Endothelial cell of umbilical vein (primary cell): ENCODE measurements at regions of chr6 and their contacts with region 1.

Region 1: DNA sequence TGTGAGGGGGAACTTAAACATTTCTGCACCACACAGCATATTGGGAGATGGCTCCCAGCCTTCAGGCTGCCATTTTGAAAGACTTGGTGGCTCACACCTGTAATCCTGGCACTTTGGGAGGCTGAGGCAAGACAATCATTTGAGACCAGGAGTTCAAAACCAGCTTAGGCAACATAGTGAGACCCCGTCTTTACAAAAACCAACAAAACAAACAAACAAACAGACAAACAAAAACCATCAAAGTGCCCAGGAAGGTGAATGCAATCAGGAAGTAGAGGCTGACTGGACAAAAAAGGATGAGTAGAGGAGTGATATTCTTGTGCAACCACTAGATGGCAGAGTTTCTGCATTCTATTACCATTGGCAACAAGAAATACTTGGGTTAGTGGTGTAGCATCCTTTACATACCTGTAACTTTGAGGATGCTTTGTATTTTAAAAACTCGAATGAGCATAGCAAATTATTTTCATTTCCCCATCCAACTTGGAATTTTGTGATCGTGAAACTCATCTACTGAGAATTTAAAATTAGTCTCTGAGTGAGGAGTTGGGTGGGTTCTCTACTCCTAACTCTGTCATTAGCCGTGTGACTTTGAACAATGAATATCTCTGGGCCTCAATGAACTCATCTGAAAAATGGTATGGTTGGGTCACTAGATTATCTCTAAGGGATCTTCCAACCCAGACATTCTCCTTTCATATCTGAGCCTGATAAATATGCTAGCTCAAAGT is 84.4 kb downstream of the CRYBG1 start:
- DNase-seq: peak; percentile 52
- H3K4me3 ChIP-seq: no peak overlapping the region
- H3K27ac ChIP-seq: no peak overlapping the region
- H3K4me1 ChIP-seq: no peaks in the 10 kb centered on the region
- H3K27me3 ChIP-seq: peaks cover 14 to 29% of the 10 kb centered on the region in 2 experiments
- CTCF ChIP-seq: peak; percentile 61 to 68
- POLR2A ChIP-seq: no peak

Region 2: GRCh38 chr6:106237286-106237685 is 207.7 kb before region 1 on chr6:
- CTCF ChIA-PET with region 1: no interaction called
- POLR2A ChIA-PET with region 1: no interaction called
- dilution Hi-C with region 1: no loop called
- intact Hi-C with region 1: no loop called
- DNase-seq: no peak
- H3K4me3 ChIP-seq: no peak overlapping the region
- H3K27ac ChIP-seq: no peak overlapping the region
- H3K4me1 ChIP-seq: no peaks in the 10 kb centered on the region
- H3K27me3 ChIP-seq: no peaks in the 10 kb centered on the region
- CTCF ChIP-seq: no peak
- POLR2A ChIP-seq: no peak

Region 3: DNA sequence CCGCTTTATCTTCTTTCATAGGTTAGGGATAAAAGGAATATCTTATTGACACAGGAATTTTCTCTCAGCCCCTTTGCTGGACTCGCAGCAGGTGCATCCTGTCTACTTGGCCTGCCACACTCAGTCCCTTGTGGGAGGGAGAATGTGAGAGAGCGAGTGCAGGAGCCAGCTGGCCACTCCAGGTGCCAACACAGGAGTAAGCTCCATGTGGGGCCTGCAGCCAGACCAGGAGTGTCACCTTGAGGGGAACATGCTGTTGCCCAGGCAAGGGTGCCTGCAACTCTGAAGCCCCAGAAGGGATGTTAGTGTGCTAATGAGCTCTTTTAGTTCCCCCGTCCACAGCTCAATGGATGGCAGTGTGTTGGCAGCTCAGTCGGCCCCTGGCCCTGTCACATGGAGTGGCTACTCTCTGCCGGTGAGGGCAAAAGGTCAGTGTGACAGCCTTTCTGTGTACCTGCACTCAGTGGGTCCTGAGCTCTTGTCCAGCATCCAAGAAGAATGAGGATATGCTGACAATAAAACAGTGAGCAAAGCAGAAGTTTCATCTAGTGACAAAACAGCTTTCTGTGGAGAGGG is 27.3 kb before region 1 on chr6:
- CTCF ChIA-PET with region 1: no interaction called
- POLR2A ChIA-PET with region 1: no interaction called
- dilution Hi-C with region 1: no loop called
- intact Hi-C with region 1: no loop called
- DNase-seq: peak; percentile 34
- H3K4me3 ChIP-seq: no peak overlapping the region
- H3K27ac ChIP-seq: no peak overlapping the region
- H3K4me1 ChIP-seq: no peaks in the 10 kb centered on the region
- H3K27me3 ChIP-seq: peaks cover 0 to 2% of the 10 kb centered on the region in 2 experiments
- CTCF ChIP-seq: no peak
- POLR2A ChIP-seq: no peak

Region 4: GRCh38 chr6:106556368-106556960 is 111.5 kb after region 1 on chr6:
- CTCF ChIA-PET with region 1: interaction called, 397 read pairs
- POLR2A ChIA-PET with region 1: no interaction called
- dilution Hi-C with region 1: loop called (anchors 25 kb)
- intact Hi-C with region 1: loop called (anchors 2 kb)
- DNase-seq: peak; percentile 61
- H3K4me3 ChIP-seq: no peak overlapping the region
- H3K27ac ChIP-seq: no peak overlapping the region
- H3K4me1 ChIP-seq: no peaks in the 10 kb centered on the region
- H3K27me3 ChIP-seq: no peaks in the 10 kb centered on the region
- CTCF ChIP-seq: peak in 1 of 2 donors; percentile 28
- POLR2A ChIP-seq: no peak

Region 5: DNA sequence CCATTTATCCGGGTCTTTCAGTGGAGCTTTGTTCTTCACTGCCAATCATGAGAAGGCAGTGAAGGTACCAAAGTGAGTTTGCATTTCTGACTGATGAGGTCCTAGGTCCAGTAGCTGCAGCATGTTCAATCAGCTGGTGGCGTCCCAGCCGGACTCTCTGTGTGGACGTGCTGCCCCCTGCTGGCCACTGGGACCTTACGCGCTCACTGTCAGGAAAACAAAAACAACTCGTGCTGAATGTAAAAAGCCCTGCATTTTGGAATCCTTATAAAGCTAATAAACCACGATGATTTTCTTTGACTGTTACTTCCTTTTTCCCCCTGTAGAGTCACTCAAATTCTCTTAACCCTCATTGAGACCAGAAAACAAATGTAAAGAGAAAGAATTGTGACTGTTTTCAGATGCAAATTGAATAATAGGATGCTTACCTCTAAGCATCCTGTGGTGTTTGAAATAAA is 534.5 kb after region 1 on chr6:
- CTCF ChIA-PET with region 1: interaction called, 79 read pairs
- POLR2A ChIA-PET with region 1: no interaction called
- dilution Hi-C with region 1: no loop called
- intact Hi-C with region 1: loop called (anchors 1 kb)
- DNase-seq: peak; percentile 78
- H3K4me3 ChIP-seq: no peak overlapping the region
- H3K27ac ChIP-seq: no peak overlapping the region
- H3K4me1 ChIP-seq: no peaks in the 10 kb centered on the region
- H3K27me3 ChIP-seq: peaks cover 11 to 23% of the 10 kb centered on the region in 2 experiments
- CTCF ChIP-seq: peak; percentile 93 to 94
- POLR2A ChIP-seq: no peak